ENCODE measurements at regions of chr5 and their contacts with region 1.

Region 1: GRCh38 chr5:157312492-157312891 is 46.6 kb downstream of the CYFIP2 start:
- DNase-seq: peak in 1 of 2 donors; percentile 63
- ATAC-seq: peak; percentile 80 to 92 (median 84)
- H3K4me3 ChIP-seq: no peak overlapping the region
- H3K27ac ChIP-seq: no peak overlapping the region
- H3K4me1 ChIP-seq: no peaks in the 10 kb centered on the region
- H3K27me3 ChIP-seq: no peaks in the 10 kb centered on the region
- CTCF ChIP-seq: peak; percentile 65

Region 2: GRCh38 chr5:156835905-156836304 is 476.6 kb before region 1 on chr5:
- intact Hi-C with region 1: no loop called
- DNase-seq: no peak
- ATAC-seq: no peak
- H3K4me3 ChIP-seq: no peak overlapping the region
- H3K27ac ChIP-seq: no peak overlapping the region
- H3K4me1 ChIP-seq: no peaks in the 10 kb centered on the region
- H3K27me3 ChIP-seq: no peaks in the 10 kb centered on the region
- CTCF ChIP-seq: no peak

Region 3: GRCh38 chr5:157148734-157149615 is 163.5 kb before region 1 on chr5:
- intact Hi-C with region 1: loop called in 1 of 2 experiments (anchors 1 kb)
- DNase-seq: peak in 1 of 2 donors; percentile 27
- ATAC-seq: peak in 3 of 4 donors; percentile 58 to 80 (median 63)
- H3K4me3 ChIP-seq: no peak overlapping the region
- H3K27ac ChIP-seq: no peak overlapping the region
- H3K4me1 ChIP-seq: no peaks in the 10 kb centered on the region
- H3K27me3 ChIP-seq: no peaks in the 10 kb centered on the region
- CTCF ChIP-seq: peak; percentile 77

Region 4: GRCh38 chr5:157253547-157253946 is 58.9 kb before region 1 on chr5:
- intact Hi-C with region 1: loop called (anchors 2 to 5 kb)
- DNase-seq: no peak
- ATAC-seq: peak; percentile 65 to 93 (median 82)
- H3K4me3 ChIP-seq: no peak overlapping the region
- H3K27ac ChIP-seq: no peak overlapping the region
- H3K4me1 ChIP-seq: no peaks in the 10 kb centered on the region
- H3K27me3 ChIP-seq: no peaks in the 10 kb centered on the region
- CTCF ChIP-seq: peak; percentile 75

Measured in psoas muscle (tissue), 8 donors.